Endothelial cell of umbilical vein (primary cell): ENCODE measurements at regions of chr5 and their contacts with region 1.

Region 1: GRCh38 chr5:145887976-145888574 is 15.3 kb upstream of the GRXCR2 start:
- DNase-seq: peak; percentile 64
- H3K4me3 ChIP-seq: no peak overlapping the region
- H3K27ac ChIP-seq: no peak overlapping the region
- H3K4me1 ChIP-seq: no peaks in the 10 kb centered on the region
- H3K27me3 ChIP-seq: peaks cover 0 to 9% of the 10 kb centered on the region in 2 experiments
- CTCF ChIP-seq: peak; percentile 63 to 78
- POLR2A ChIP-seq: no peak

Region 2: GRCh38 chr5:145378226-145378625 is 509.8 kb before region 1 on chr5:
- CTCF ChIA-PET with region 1: no interaction called
- POLR2A ChIA-PET with region 1: no interaction called
- dilution Hi-C with region 1: no loop called
- intact Hi-C with region 1: no loop called
- DNase-seq: no peak
- H3K4me3 ChIP-seq: no peak overlapping the region
- H3K27ac ChIP-seq: no peak overlapping the region
- H3K4me1 ChIP-seq: no peaks in the 10 kb centered on the region
- H3K27me3 ChIP-seq: no peaks in the 10 kb centered on the region
- CTCF ChIP-seq: no peak
- POLR2A ChIP-seq: no peak

Region 3: GRCh38 chr5:145697251-145697990 is 190.7 kb before region 1 on chr5:
- CTCF ChIA-PET with region 1: interaction called, 45 read pairs
- POLR2A ChIA-PET with region 1: no interaction called
- dilution Hi-C with region 1: no loop called
- intact Hi-C with region 1: loop called (anchors 2 kb)
- DNase-seq: peak; percentile 68
- H3K4me3 ChIP-seq: no peak overlapping the region
- H3K27ac ChIP-seq: no peak overlapping the region
- H3K4me1 ChIP-seq: no peaks in the 10 kb centered on the region
- H3K27me3 ChIP-seq: no peaks in the 10 kb centered on the region
- CTCF ChIP-seq: peak; percentile 61 to 74
- POLR2A ChIP-seq: no peak

Region 4: GRCh38 chr5:145811834-145812625 is 76.0 kb before region 1 on chr5:
- CTCF ChIA-PET with region 1: interaction called, 19 read pairs
- POLR2A ChIA-PET with region 1: no interaction called
- dilution Hi-C with region 1: no loop called
- intact Hi-C with region 1: no loop called
- DNase-seq: peak; percentile 69
- H3K4me3 ChIP-seq: no peak overlapping the region
- H3K27ac ChIP-seq: no peak overlapping the region
- H3K4me1 ChIP-seq: no peaks in the 10 kb centered on the region
- H3K27me3 ChIP-seq: no peaks in the 10 kb centered on the region
- CTCF ChIP-seq: peak; percentile 27 to 43
- POLR2A ChIP-seq: no peak

Region 5: GRCh38 chr5:145834917-145835847 is 52.9 kb before region 1 on chr5 and contains the start of gene PRELID2:
- CTCF ChIA-PET with region 1: interaction called, 43 read pairs
- POLR2A ChIA-PET with region 1: no interaction called
- dilution Hi-C with region 1: no loop called
- intact Hi-C with region 1: no loop called
- DNase-seq: peak; percentile 87
- H3K4me3 ChIP-seq: peak within 1 kb of the TSS; percentile 60 to 79 (median 69)
- H3K27ac ChIP-seq: peak within 1 kb of the TSS; percentile 65
- H3K4me1 ChIP-seq: peaks cover 26% of the 10 kb centered on the region
- H3K27me3 ChIP-seq: no peaks in the 10 kb centered on the region
- CTCF ChIP-seq: no peak
- POLR2A ChIP-seq: peak; percentile 43
- total RNA-seq, gene PRELID2: 14.9 and 16.4 TPM in 2 replicates

Region 6: DNA sequence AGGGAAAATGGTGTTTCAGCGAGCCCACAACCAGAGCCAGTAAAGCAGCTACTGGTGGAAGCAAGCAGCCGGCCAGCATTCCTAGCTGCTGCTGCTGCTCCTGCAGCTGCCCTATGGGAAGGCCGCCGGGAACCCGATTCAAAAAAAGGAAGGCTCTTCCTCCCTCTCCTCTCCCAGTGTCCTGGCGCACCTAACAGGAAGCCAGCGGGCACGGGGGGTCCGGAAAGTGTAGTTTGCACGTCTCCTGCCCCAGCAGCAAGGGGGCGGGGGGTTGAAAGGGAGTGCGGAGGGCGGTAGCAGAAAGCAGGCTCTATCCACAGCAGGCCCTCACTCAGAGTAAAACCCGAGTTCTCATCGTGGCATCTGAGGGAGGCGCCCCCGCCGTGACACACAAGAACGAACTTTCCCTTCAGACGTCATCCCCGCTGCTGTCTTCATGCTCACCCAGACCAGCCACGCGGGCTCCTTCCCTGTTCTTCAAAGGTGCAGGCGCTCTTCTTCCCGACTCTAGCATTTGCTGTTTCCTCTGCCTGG is 31.7 kb before region 1 on chr5:
- CTCF ChIA-PET with region 1: interaction called, 10 read pairs
- POLR2A ChIA-PET with region 1: no interaction called
- dilution Hi-C with region 1: no loop called
- intact Hi-C with region 1: no loop called
- DNase-seq: peak; percentile 41
- H3K4me3 ChIP-seq: peak overlapping the region in 1 of 3 experiments; percentile 2
- H3K27ac ChIP-seq: no peak overlapping the region
- H3K4me1 ChIP-seq: peaks cover 18% of the 10 kb centered on the region
- H3K27me3 ChIP-seq: peaks cover 0 to 4% of the 10 kb centered on the region in 2 experiments
- CTCF ChIP-seq: no peak
- POLR2A ChIP-seq: no peak

Region 7: GRCh38 chr5:145925353-145925752 is 37.3 kb after region 1 on chr5:
- CTCF ChIA-PET with region 1: interaction called, 4 read pairs
- POLR2A ChIA-PET with region 1: no interaction called
- dilution Hi-C with region 1: no loop called
- intact Hi-C with region 1: loop called (anchors 1 kb)
- DNase-seq: peak; percentile 80
- H3K4me3 ChIP-seq: no peak overlapping the region
- H3K27ac ChIP-seq: peak overlapping the region; percentile 37
- H3K4me1 ChIP-seq: peaks cover 19% of the 10 kb centered on the region
- H3K27me3 ChIP-seq: no peaks in the 10 kb centered on the region
- CTCF ChIP-seq: no peak
- POLR2A ChIP-seq: no peak